Tibial artery (tissue), 4 donors: ENCODE measurements at regions of chr12 and their contacts with region 1.

Region 1: GRCh38 chr12:120432772-120433525 is 5.0 kb upstream of the COX6A1 start:
- DNase-seq: no peak
- H3K4me3 ChIP-seq: no peak overlapping the region
- H3K27ac ChIP-seq: no peak overlapping the region
- H3K4me1 ChIP-seq: peaks cover 0 to 3% (median 1%) of the 10 kb centered on the region in 4 donors
- H3K27me3 ChIP-seq: peaks cover 0 to 35% of the 10 kb centered on the region in 2 donors
- CTCF ChIP-seq: no peak

Region 2: DNA sequence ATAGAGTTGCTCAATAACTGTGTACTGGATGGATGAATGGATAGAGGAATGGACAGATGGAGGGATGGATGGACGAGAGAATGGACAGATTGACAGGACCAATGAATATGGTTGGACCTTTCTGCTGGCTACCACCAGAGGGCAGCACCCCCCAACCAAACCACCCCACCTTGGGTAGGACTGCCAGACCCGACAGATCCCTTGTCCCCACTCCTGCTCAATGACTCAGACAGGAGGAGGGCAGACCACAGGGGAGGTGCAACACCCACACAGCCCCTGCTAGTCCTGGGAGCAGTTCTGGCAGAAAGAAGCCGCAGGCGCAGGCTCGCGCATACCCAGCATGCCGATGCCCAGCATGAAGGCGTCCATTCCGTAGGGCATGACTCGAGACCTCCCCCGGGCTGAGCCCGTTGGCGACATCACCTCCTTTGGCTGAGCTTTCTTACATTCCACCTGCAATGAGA is 76.3 kb before region 1 on chr12:
- intact Hi-C with region 1: loop called (anchors 5 kb)
- DNase-seq: peak; percentile 36 to 76
- H3K4me3 ChIP-seq: no peak overlapping the region
- H3K27ac ChIP-seq: no peak overlapping the region
- H3K4me1 ChIP-seq: peaks cover 0 to 8% (median 4%) of the 10 kb centered on the region in 4 donors
- H3K27me3 ChIP-seq: peaks cover 0 to 23% of the 10 kb centered on the region in 2 donors
- CTCF ChIP-seq: peak; percentile 75 to 77